Calu3 (cell line): ENCODE measurements at regions of chr17 and their contacts with region 1.

Region 1: DNA sequence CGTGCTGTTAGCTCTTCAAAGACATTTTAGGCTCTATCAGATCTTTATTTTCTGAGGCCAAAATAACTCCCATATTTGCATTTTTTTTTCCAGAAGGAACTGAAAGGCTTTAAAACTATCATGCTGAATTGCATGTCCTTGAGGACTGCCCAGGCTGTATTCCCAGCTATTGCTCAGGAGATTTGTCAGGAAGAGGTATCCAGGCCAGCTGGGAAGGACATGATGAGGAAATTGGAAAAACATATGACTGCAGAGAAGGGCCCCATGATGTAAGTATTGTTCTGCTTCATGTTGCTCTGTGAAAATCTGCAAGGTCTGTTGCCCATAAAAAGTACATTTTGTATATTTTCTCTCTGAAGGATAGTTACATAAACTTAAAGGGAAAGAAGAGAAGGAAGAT is 5.7 kb downstream of the CDC6 start:
- DNase-seq: no peak
- H3K4me3 Mint-ChIP-seq: no peak overlapping the region
- H3K27ac Mint-ChIP-seq: peak overlapping the region; percentile 27
- H3K4me1 Mint-ChIP-seq: peaks cover 50% of the 10 kb centered on the region
- H3K27me3 Mint-ChIP-seq: no peaks in the 10 kb centered on the region
- CTCF ChIP-seq: no peak

Region 2: DNA sequence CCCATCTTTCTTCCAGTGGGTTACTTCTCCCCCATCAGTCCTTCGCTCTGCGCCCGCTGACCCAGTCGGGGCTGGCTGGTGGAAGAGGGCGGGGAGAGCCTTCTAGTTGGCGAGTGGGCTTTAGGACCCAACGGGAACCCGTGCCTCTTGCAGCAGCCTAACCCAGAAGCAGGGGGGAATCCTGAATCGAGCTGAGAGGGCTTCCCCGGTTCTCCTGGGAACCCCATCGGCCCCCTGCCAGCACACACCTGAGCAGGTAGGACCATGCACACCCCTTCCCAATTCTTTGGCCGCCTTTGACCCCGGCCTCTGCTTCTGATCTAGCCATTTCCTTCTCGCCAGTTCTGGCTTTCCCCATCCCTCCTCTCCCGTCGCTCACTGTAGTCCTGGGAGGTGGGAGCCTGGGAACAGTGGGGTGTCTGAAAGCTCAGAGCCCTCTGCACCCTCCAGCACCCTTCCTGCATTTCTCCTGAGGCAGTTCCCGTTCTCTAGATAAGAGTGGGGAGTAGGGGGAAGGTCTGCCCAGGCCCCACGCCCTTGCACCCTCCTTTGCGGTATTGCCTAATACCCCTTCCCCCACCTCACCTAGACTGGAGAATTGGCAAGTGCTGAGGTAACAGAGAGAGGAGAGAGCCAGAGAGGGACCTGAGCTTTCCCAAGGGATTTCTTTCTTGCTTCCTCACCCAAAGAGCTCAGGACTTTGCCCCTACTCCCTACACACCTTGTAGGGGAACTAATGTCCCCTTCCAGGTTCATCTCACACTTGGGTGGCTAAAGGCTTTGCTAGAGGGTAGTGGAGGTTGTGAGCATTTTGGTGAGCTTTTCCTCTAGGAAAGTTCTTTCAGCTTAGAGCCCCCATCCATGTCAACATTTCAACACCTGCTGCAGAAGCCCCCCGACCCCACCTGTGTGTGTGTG is 15.9 kb after region 1 on chr17 and contains the start of gene RARA:
- CTCF ChIA-PET with region 1: interaction called, 23 read pairs
- intact Hi-C with region 1: no loop called
- DNase-seq: peak; percentile 90
- H3K4me3 Mint-ChIP-seq: no peak within 1 kb of the TSS
- H3K27ac Mint-ChIP-seq: no peak within 1 kb of the TSS
- H3K4me1 Mint-ChIP-seq: peaks cover 2% of the 10 kb centered on the region
- H3K27me3 Mint-ChIP-seq: no peaks in the 10 kb centered on the region
- CTCF ChIP-seq: no peak
- total RNA-seq, gene RARA: 150 and 170 TPM in 2 replicates

Region 3: GRCh38 chr17:40355123-40355803 is 61.9 kb after region 1 on chr17:
- CTCF ChIA-PET with region 1: interaction called, 13 read pairs
- intact Hi-C with region 1: no loop called
- DNase-seq: peak; percentile 100
- H3K4me3 Mint-ChIP-seq: no peak overlapping the region
- H3K27ac Mint-ChIP-seq: no peak overlapping the region
- H3K4me1 Mint-ChIP-seq: peaks cover 29% of the 10 kb centered on the region
- H3K27me3 Mint-ChIP-seq: no peaks in the 10 kb centered on the region
- CTCF ChIP-seq: no peak

Region 4: DNA sequence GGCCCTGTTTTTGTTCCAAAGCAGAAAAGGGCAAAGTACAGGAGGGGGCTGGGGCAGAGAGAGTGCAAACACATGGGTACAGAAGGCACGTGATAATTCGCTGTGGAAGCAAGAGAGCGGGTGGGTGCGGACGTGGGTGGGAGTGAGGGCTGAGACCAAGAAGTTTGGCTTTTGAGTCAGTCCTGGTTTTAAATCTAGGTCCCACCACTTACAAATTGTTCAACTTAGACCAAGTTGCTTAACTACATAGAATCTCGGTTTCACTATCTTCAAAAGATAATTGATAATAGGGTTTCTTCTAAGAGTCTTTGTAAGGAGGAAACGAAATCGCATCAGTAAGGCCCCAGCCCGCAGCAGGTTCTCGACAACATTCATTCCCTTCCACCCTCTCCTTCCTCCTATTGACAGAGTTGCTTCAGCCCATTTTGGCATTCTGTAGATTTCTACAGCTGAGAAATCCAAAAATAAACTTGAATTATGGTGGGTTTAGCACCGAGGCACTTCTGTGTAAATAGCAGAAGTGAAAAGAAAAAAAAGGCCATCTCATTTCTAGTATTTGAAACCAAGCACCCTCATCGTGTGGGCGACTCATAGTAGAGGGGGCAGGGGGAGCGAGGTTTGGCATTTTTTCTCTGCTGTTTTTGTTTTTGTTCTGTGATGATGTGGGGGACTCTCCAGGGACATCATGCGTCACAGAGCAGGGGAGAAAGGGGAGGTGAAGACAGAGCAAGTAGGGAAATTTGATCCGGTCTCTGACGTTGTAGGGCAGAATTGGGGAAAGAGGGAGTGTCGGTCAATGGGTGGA is 305.5 kb after region 1 on chr17:
- CTCF ChIA-PET with region 1: no interaction called
- intact Hi-C with region 1: no loop called
- DNase-seq: no peak
- H3K4me3 Mint-ChIP-seq: no peak overlapping the region
- H3K27ac Mint-ChIP-seq: no peak overlapping the region
- H3K4me1 Mint-ChIP-seq: peaks cover 10% of the 10 kb centered on the region
- H3K27me3 Mint-ChIP-seq: peaks cover 37% of the 10 kb centered on the region
- CTCF ChIP-seq: no peak